Heart right ventricle (tissue), 16 donors: ENCODE measurements at regions of chr3 and their contacts with region 1.

Region 1: GRCh38 chr3:178443634-178444033 is 92.6 kb upstream of the KCNMB2 start:
- DNase-seq: no peak
- ATAC-seq: peak in 2 of 8 donors; percentile 20 to 31
- H3K4me3 ChIP-seq: no peak overlapping the region
- H3K27ac ChIP-seq: no peak overlapping the region
- H3K4me1 ChIP-seq: no peaks in the 10 kb centered on the region
- H3K27me3 ChIP-seq: no peaks in the 10 kb centered on the region
- CTCF ChIP-seq: peak in 5 of 9 donors; percentile 22 to 46 (median 44)

Region 2: GRCh38 chr3:177887475-177887874 is 556.2 kb before region 1 on chr3:
- intact Hi-C with region 1: no loop called
- DNase-seq: no peak
- ATAC-seq: no peak
- H3K4me3 ChIP-seq: no peak overlapping the region
- H3K27ac ChIP-seq: no peak overlapping the region
- H3K4me1 ChIP-seq: peaks cover 0 to 10% (median 0%) of the 10 kb centered on the region in 9 donors
- H3K27me3 ChIP-seq: no peaks in the 10 kb centered on the region
- CTCF ChIP-seq: no peak

Region 3: GRCh38 chr3:178536211-178537079 is 92.8 kb after region 1 on chr3 and contains the start of gene KCNMB2:
- intact Hi-C with region 1: loop called in 1 of 10 experiments (anchors 10 kb)
- DNase-seq: peak in 1 of 2 donors; percentile 8
- ATAC-seq: peak; percentile 62 to 88 (median 84)
- H3K4me3 ChIP-seq: peak within 1 kb of the TSS; percentile 25 to 63 (median 54)
- H3K27ac ChIP-seq: peak within 1 kb of the TSS in 8 of 10 donors; percentile 28 to 70 (median 52)
- H3K4me1 ChIP-seq: peaks cover 0 to 10% (median 0%) of the 10 kb centered on the region in 9 donors
- H3K27me3 ChIP-seq: no peaks in the 10 kb centered on the region
- CTCF ChIP-seq: no peak
- total RNA-seq, gene KCNMB2: 1.5 to 9.2 (median 4.2) TPM

Region 4: GRCh38 chr3:178743297-178743696 is 299.7 kb after region 1 on chr3:
- intact Hi-C with region 1: loop called in 1 of 10 experiments (anchors 10 kb)
- DNase-seq: no peak
- ATAC-seq: peak in 1 of 8 donors; percentile 43
- H3K4me3 ChIP-seq: no peak overlapping the region
- H3K27ac ChIP-seq: no peak overlapping the region
- H3K4me1 ChIP-seq: peaks cover 0 to 6% (median 0%) of the 10 kb centered on the region in 9 donors
- H3K27me3 ChIP-seq: no peaks in the 10 kb centered on the region
- CTCF ChIP-seq: no peak

Region 5: DNA sequence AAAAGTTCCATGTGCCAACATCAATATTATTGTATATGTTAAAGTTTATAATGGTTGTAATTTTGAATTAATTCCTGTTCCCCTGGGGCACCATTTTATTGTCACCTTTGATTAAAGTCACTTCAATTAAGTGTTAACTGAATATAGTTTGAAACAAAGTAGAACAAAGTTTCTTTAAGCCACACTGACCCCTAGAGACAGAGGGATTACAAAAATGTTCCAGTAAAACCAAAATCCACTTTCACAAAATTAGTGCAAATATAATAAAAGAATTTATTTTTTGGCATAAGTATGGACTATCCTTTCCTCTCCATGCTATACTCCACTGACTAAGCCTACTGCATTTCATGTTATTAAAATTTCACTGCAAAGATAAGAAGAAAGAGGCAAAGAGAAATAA is 504.1 kb after region 1 on chr3:
- intact Hi-C with region 1: loop called in 4 of 10 experiments (anchors 5 kb)
- DNase-seq: no peak
- ATAC-seq: no peak
- H3K4me3 ChIP-seq: no peak overlapping the region
- H3K27ac ChIP-seq: no peak overlapping the region
- H3K4me1 ChIP-seq: no peaks in the 10 kb centered on the region
- H3K27me3 ChIP-seq: no peaks in the 10 kb centered on the region
- CTCF ChIP-seq: peak in 7 of 9 donors; percentile 26 to 59 (median 50)

Region 6: GRCh38 chr3:178966299-178967176 is 522.9 kb after region 1 on chr3:
- intact Hi-C with region 1: loop called in 8 of 10 experiments (anchors 2 to 10 kb)
- DNase-seq: no peak
- ATAC-seq: peak in 5 of 8 donors; percentile 43 to 94 (median 61)
- H3K4me3 ChIP-seq: peak overlapping the region in 5 of 10 donors; percentile 8 to 29 (median 16)
- H3K27ac ChIP-seq: peak overlapping the region in 5 of 10 donors; percentile 13 to 55 (median 32)
- H3K4me1 ChIP-seq: peaks cover 0 to 20% (median 14%) of the 10 kb centered on the region in 9 donors
- H3K27me3 ChIP-seq: no peaks in the 10 kb centered on the region
- CTCF ChIP-seq: peak in 8 of 9 donors; percentile 34 to 76 (median 64)